Astrocyte of the cerebellum (primary cell): ENCODE measurements at regions of chr13 and their contacts with region 1.

Region 1: GRCh38 chr13:40026174-40026585 is 370.7 kb downstream of the COG6 start:
- DNase-seq: no peak
- H3K4me3 ChIP-seq: no peak overlapping the region
- CTCF ChIP-seq: no peak

Region 2: GRCh38 chr13:40087091-40088002 is 61.2 kb after region 1 on chr13:
- in situ Hi-C with region 1: loop called (anchors 5 kb)
- DNase-seq: no peak
- H3K4me3 ChIP-seq: no peak overlapping the region
- CTCF ChIP-seq: no peak